ENCODE measurements at regions of chr17 and their contacts with region 1.

Region 1: GRCh38 chr17:28576758-28577465 is at the start of gene ALDOC:
- DNase-seq: peak; percentile 98
- H3K4me3 Mint-ChIP-seq: peak within 1 kb of the TSS; percentile 80
- H3K27ac Mint-ChIP-seq: peak within 1 kb of the TSS; percentile 84
- H3K4me1 Mint-ChIP-seq: peaks cover 40% of the 10 kb centered on the region
- H3K27me3 Mint-ChIP-seq: no peaks in the 10 kb centered on the region
- total RNA-seq, gene ALDOC: 65.6 to 66.2 TPM

Region 2: DNA sequence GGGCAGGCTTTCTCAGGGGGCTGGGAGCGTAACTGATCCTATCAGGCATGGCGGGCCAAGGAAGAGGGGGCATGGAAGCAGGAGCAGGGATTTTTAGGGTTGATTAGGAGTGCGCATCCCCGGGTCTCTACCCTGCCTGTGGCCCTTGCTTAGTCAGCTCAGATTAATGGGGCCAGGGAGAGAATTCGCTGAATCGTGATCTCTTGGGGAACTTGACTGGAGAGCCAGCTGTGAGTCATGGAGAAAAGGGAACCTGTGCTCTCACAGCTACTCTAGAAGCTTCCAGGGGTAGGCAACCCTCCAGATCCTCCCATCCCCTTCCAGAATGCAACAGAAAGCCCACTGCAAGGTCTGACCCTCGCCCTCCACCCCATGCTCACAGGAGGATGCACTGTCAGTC is 67.1 kb before region 1 on chr17:
- CTCF ChIA-PET with region 1: no interaction called
- intact Hi-C with region 1: no loop called
- DNase-seq: no peak
- H3K4me3 Mint-ChIP-seq: no peak overlapping the region
- H3K27ac Mint-ChIP-seq: no peak overlapping the region
- H3K4me1 Mint-ChIP-seq: no peaks in the 10 kb centered on the region
- H3K27me3 Mint-ChIP-seq: peaks cover 20% of the 10 kb centered on the region

Region 3: DNA sequence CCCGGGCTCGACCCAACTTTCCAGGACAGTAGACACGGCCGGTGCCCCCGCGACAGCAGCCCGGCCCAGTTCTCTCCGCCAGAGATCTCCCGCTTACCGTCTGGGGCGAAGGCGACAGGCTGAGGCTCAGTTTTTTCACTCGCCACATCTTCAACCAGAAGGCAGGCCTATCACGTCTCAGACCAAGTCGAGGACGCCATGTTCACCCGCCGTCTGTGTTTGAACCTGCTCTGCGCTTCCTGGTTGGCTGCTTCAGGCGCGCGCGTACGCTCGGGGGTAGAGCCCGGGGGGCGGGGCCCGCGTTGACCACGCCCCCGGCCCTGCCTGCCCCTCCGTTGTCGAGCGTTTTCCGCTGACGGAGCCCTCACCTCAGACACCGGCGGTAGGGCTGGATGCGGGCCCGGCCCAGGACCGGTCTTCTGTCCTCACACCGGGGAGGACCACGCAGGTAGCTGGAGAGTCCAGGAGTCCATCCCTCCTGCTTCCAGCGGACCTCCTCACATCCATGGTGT is 21.9 kb after region 1 on chr17 and contains the start of gene SPAG5:
- CTCF ChIA-PET with region 1: no interaction called
- intact Hi-C with region 1: loop called (anchors 1 kb)
- DNase-seq: peak; percentile 96
- H3K4me3 Mint-ChIP-seq: peak within 1 kb of the TSS; percentile 95
- H3K27ac Mint-ChIP-seq: peak within 1 kb of the TSS; percentile 94
- H3K4me1 Mint-ChIP-seq: peaks cover 15% of the 10 kb centered on the region
- H3K27me3 Mint-ChIP-seq: no peaks in the 10 kb centered on the region
- total RNA-seq, gene SPAG5: 210 to 216 TPM

Measured in activated naive CD4-positive, alpha-beta T cell treated with anti-CD3 and anti-CD28 coated beads for 36 hours (primary cell).